Pancreas (tissue), 10 donors: ENCODE measurements at regions of chr3 and their contacts with region 1.

Region 1: DNA sequence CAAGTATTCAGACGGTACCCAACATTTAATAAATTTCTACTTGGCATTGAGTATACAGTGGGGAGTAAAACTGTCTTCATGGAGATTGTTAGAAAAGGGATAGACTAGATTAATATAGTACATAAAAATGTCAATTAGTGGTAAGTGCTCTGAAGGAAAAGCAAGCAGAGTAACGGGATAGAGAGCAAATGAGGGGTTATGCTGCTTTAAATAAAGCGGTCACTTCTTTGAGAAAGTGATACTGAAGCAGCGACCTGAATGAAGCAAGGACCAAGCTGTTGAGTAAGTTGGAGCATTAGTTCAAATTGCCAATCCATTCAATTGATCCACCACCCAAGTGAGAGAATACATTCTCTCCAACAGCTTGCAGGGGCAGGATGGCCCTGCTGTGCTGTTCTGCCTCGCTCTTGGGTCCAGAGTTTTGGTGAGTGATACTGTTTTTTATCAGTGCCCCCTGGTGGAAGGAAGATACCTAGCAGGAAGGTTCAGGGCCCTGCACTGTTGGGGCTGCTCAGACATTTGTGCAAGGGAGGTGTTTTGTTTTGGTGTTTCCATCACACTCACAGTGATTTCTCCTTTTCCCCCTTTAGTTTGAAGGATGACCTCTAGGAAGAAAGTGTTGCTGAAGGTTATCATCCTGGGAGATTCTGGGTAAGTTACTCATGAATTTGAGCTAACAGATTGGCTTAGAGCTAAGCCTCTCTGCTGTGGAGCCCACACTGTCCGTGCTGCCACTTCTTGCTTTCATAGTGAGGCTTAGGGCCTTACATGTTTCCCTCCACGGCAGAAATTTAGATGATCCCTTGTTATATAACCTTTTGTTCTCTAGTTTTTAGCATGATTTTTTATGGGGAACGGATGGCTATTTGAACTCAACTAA is 69.0 kb downstream of the RAB7A start:
- DNase-seq: peak in 4 of 6 donors; percentile 33 to 64 (median 44)
- ATAC-seq: peak; percentile 93 to 98 (median 98)
- H3K4me3 ChIP-seq: no peak overlapping the region
- H3K27ac ChIP-seq: no peak overlapping the region
- H3K4me1 ChIP-seq: peaks cover 0 to 6% (median 0%) of the 10 kb centered on the region in 3 donors
- H3K27me3 ChIP-seq: no peaks in the 10 kb centered on the region
- CTCF ChIP-seq: peak; percentile 58 to 73 (median 66)

Region 2: GRCh38 chr3:128482666-128483656 is 312.0 kb before region 1 on chr3:
- intact Hi-C with region 1: no loop called
- DNase-seq: peak in 1 of 6 donors; percentile 24
- ATAC-seq: no peak
- H3K4me3 ChIP-seq: no peak overlapping the region
- H3K27ac ChIP-seq: no peak overlapping the region
- H3K4me1 ChIP-seq: peaks cover 0 to 3% (median 0%) of the 10 kb centered on the region in 3 donors
- H3K27me3 ChIP-seq: no peaks in the 10 kb centered on the region
- CTCF ChIP-seq: no peak

Region 3: GRCh38 chr3:128559486-128560225 is 235.4 kb before region 1 on chr3:
- intact Hi-C with region 1: no loop called
- DNase-seq: no peak
- ATAC-seq: peak in 1 of 4 donors; percentile 54
- H3K4me3 ChIP-seq: no peak overlapping the region
- H3K27ac ChIP-seq: no peak overlapping the region
- H3K4me1 ChIP-seq: no peaks in the 10 kb centered on the region
- H3K27me3 ChIP-seq: peaks cover 0 to 3% (median 0%) of the 10 kb centered on the region in 4 donors
- CTCF ChIP-seq: no peak

Region 4: DNA sequence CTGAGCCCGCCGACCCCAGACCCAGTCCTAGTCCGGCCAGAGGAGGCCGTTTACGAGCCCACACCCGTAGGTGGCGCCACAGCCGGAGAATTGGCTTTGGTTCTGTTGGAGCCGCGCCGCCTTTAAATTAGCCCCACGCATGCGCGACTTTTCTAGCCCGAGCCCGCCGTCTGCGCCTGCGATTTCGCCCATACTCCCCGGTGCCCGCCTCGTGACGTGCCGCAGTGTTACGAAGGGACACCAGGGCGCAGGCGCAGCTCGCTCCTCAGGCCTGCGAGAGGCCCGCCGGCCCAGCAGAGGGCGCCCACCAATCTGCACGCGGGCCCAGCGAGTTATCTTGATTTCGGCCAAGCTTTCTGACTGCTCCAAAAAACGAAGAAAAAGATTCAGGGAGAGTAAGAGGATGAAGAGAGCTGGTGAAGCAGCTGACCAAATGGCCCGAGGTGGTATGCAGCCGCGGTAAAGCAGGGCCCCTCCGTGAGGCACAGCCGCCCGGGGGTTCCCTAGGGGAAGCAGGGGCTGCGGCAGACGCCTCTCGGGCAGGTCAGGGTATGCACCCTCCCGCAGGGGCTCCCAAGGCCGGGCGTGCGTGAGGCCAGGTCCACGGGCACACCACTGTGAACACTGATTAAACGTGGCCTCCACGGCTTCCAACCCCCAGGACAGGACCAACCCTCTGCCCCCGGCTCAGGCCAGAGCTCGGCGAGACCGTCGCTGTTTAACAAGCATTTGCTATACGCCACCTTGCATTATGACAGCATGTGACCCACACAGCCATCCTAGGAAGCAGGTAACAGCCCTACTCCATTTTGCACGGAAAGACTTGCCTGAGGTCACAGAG is 177.2 kb before region 1 on chr3:
- intact Hi-C with region 1: loop called in 1 of 3 experiments (anchors 10 kb)
- DNase-seq: peak; percentile 95 to 99 (median 96)
- ATAC-seq: peak; percentile 96 to 99 (median 97)
- H3K4me3 ChIP-seq: peak overlapping the region; percentile 48 to 81 (median 59)
- H3K27ac ChIP-seq: peak overlapping the region in 3 of 4 donors; percentile 37 to 84 (median 67)
- H3K4me1 ChIP-seq: peaks cover 0 to 10% (median 7%) of the 10 kb centered on the region in 3 donors
- H3K27me3 ChIP-seq: no peaks in the 10 kb centered on the region
- CTCF ChIP-seq: peak; percentile 85 to 98 (median 89)

Region 5: GRCh38 chr3:128680602-128681368 is 114.2 kb before region 1 on chr3:
- intact Hi-C with region 1: loop called in 2 of 3 experiments (anchors 10 kb)
- DNase-seq: peak; percentile 98 to 100 (median 99)
- ATAC-seq: peak; percentile 97 to 99 (median 98)
- H3K4me3 ChIP-seq: peak overlapping the region; percentile 37 to 84 (median 64)
- H3K27ac ChIP-seq: peak overlapping the region; percentile 93 to 96 (median 96)
- H3K4me1 ChIP-seq: peaks cover 0 to 5% (median 3%) of the 10 kb centered on the region in 3 donors
- H3K27me3 ChIP-seq: no peaks in the 10 kb centered on the region
- CTCF ChIP-seq: peak; percentile 79 to 99 (median 88)